SK-N-SH (cell line): ENCODE measurements at regions of chr11 and their contacts with region 1.

Region 1: DNA sequence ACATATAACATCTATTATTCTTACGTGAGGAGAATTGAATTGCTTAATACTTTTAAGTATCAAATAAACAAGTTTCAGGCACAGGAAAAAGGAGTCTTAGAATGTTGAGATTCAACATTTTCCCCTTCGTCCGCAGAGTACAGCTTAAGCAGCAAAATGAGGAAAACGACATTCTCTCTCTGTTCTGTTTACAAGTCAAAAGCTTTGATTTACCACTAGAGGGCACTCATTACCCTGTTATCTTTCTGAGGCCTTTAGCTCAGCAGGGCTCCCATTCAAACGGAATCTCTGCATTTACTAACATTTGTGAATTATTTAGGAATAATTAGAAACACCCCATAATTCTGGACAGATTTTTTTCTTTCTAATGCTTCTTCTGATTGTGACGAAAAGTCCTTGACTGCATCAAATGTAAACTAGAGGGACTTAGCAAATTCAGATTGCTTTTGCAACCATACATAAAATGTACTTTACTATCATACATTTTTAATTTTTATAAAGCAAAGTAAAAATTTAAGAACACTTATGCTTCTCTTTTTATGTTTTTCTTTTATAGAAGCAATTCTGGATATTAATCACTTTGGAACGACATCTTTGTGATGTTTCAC is 75.0 kb downstream of the JRKL start:
- DNase-seq: peak; percentile 61
- H3K4me3 ChIP-seq: peak overlapping the region in 1 of 2 experiments; percentile 58; a peak in 1 of 4 replicates
- H3K27ac ChIP-seq: no peak overlapping the region
- H3K4me1 ChIP-seq: no peaks in the 10 kb centered on the region; a peak in 1 of 4 replicates
- H3K27me3 ChIP-seq: peaks cover 12% of the 10 kb centered on the region
- CTCF ChIP-seq: peak; percentile 81
- EP300 ChIP-seq: no peak
- RAD21 ChIP-seq: peak; percentile 96

Region 2: DNA sequence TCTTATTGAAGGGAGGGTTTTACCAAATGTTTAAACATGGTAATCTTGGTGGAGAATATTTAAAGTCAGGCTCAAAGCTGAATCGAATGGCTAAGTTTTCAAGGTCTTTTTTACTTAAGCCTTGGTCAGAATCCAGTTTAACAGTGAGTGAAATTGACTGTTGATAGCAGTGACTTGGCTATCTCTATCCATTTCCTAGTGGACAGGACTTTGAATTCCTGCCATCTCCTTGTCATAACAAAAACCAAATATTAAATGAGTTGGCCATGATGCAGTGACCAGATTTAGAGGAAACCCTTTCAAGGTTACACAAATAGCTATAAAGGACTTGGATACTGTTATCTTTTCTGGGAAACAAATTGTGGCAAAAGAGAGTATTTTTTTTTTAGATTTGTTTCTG is 17.0 kb after region 1 on chr11:
- CTCF ChIA-PET with region 1: interaction called, 23 read pairs
- POLR2A ChIA-PET with region 1: no interaction called
- DNase-seq: no peak
- H3K4me3 ChIP-seq: no peak overlapping the region
- H3K27ac ChIP-seq: no peak overlapping the region
- H3K4me1 ChIP-seq: no peaks in the 10 kb centered on the region; a peak in 1 of 4 replicates
- H3K27me3 ChIP-seq: no peaks in the 10 kb centered on the region
- CTCF ChIP-seq: no peak
- EP300 ChIP-seq: no peak
- RAD21 ChIP-seq: no peak

Region 3: DNA sequence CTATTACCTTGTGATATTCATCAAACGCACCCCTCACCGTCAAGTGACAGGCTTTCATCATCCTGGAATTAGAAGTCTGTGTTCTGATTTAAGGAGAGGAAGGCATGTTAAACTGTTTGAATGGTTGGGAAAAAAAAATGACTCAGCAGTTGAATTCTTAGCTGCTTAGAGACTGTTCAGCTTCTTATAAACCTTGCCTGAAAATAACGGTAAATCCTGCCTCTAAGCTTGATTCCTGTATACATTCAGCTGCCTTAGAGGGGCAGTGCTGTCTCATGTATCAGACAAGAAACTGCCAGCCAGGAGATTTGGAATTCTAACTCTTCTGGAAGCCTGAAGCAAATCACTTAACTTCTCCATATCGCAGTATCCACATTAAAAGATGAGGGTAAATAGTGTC is 362.4 kb after region 1 on chr11:
- CTCF ChIA-PET with region 1: interaction called, 12 read pairs
- POLR2A ChIA-PET with region 1: no interaction called
- DNase-seq: peak; percentile 1
- H3K4me3 ChIP-seq: no peak overlapping the region
- H3K27ac ChIP-seq: no peak overlapping the region
- H3K4me1 ChIP-seq: no peaks in the 10 kb centered on the region
- H3K27me3 ChIP-seq: no peaks in the 10 kb centered on the region
- CTCF ChIP-seq: peak; percentile 44
- EP300 ChIP-seq: no peak
- RAD21 ChIP-seq: peak; percentile 64

Region 4: GRCh38 chr11:97140885-97141494 is 676.2 kb after region 1 on chr11:
- CTCF ChIA-PET with region 1: interaction called, 86 read pairs
- POLR2A ChIA-PET with region 1: interaction called, 3 read pairs
- DNase-seq: peak; percentile 7
- H3K4me3 ChIP-seq: no peak overlapping the region; a peak in 1 of 4 replicates
- H3K27ac ChIP-seq: no peak overlapping the region
- H3K4me1 ChIP-seq: no peaks in the 10 kb centered on the region
- H3K27me3 ChIP-seq: no peaks in the 10 kb centered on the region
- CTCF ChIP-seq: peak; percentile 58
- EP300 ChIP-seq: no peak
- RAD21 ChIP-seq: peak; percentile 80

Region 5: DNA sequence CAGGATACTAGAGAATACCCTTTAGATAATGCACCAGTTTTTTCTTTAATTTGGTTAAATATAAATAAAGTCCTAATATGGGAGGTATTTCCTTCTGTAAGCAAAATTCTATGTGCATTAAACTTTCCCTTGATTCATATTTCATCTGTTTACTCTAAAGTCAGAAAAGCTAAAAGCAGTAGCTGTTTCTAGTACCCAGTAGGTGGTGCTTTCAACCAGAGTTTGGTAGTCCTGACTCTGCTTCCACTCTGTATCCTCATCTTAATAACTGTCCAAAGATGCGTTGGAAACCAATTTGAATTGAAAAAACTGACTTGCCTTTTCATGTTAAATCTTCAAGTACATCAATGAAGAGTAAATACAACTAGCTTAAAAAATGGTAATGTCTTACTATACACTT is 990.2 kb after region 1 on chr11:
- CTCF ChIA-PET with region 1: interaction called, 14 read pairs
- POLR2A ChIA-PET with region 1: no interaction called
- DNase-seq: peak; percentile 21
- H3K4me3 ChIP-seq: no peak overlapping the region; a peak in 1 of 4 replicates
- H3K27ac ChIP-seq: no peak overlapping the region
- H3K4me1 ChIP-seq: no peaks in the 10 kb centered on the region
- H3K27me3 ChIP-seq: no peaks in the 10 kb centered on the region
- CTCF ChIP-seq: peak; percentile 66
- EP300 ChIP-seq: no peak
- RAD21 ChIP-seq: peak; percentile 84